ENCODE measurements at regions of chrX and their contacts with region 1.

Region 1: DNA sequence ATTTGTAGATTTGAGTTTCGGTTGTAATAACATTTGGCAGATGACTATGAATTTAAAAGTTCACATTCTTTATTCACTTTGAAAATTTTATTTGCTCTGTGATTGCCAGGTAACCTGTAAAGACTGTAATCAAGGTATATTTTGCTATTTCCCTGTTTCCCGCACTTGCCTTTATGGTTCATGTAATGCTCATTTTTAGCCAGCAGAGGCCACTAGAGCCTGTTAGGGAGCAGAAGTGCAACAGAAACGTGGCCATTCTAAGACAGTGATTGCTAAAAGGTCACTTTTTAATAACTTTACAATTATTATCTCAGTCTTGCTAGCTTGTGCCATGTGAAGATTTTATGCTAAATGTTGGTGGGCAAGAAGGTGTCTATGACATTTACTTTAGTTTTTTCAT is 12.4 kb downstream of the YIPF6 start:
- DNase-seq: no peak
- H3K4me3 ChIP-seq: no peak overlapping the region
- H3K27ac ChIP-seq: no peak overlapping the region
- H3K4me1 ChIP-seq: peaks cover 37% of the 10 kb centered on the region
- H3K27me3 ChIP-seq: no peaks in the 10 kb centered on the region
- CTCF ChIP-seq: peak; percentile 77

Region 2: GRCh38 chrX:68183612-68184214 is 327.5 kb before region 1 on chrX:
- intact Hi-C with region 1: no loop called
- DNase-seq: no peak
- H3K4me3 ChIP-seq: no peak overlapping the region
- H3K27ac ChIP-seq: no peak overlapping the region
- H3K4me1 ChIP-seq: no peaks in the 10 kb centered on the region
- H3K27me3 ChIP-seq: no peaks in the 10 kb centered on the region
- CTCF ChIP-seq: peak; percentile 43

Region 3: DNA sequence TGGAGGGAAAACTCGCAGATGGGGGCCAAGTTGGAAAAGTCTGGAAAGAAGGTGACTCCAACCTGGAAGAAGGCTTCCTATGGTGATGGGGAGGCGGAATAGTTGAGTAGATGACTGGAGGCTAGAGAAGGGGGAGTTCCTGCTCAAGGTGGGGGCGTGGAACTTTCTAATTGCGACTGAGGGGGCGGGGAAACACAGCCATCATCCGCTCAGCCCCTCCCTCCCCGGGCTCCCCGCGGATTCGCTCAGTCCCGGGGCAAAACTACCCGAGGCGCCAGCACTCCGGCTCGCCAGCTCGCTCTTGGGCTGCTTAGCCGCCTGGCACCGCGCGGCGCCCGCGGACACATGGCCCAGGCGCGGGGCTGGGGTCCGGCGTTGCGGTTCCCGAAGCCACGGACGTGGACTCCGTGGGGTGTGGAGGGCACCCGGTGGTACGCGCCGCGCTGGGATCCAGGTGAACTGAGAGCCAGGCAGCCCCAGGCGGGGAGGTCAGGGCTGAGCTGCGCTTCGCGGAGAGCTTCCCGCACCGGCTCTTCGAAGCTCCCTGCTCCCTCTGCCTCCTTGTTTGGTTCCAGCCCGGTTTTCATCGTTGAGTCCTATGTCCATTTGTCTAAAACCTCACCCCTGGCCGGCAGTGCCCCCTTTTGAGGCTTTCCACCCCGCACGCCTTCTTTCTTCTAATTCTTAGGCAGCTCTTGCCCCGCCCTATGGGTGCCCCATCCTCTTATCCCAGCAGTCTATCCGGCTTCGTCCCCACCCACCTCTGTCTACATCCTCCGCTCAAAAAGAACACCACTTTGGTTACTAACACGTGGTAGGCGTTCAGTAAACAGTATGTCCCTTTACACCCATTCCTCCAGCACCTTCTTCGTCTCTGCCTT is 175.1 kb after region 1 on chrX:
- intact Hi-C with region 1: no loop called
- DNase-seq: peak; percentile 53
- H3K4me3 ChIP-seq: peak overlapping the region; percentile 65
- H3K27ac ChIP-seq: peak overlapping the region; percentile 87
- H3K4me1 ChIP-seq: peaks cover 68% of the 10 kb centered on the region
- H3K27me3 ChIP-seq: no peaks in the 10 kb centered on the region
- CTCF ChIP-seq: no peak

Region 4: DNA sequence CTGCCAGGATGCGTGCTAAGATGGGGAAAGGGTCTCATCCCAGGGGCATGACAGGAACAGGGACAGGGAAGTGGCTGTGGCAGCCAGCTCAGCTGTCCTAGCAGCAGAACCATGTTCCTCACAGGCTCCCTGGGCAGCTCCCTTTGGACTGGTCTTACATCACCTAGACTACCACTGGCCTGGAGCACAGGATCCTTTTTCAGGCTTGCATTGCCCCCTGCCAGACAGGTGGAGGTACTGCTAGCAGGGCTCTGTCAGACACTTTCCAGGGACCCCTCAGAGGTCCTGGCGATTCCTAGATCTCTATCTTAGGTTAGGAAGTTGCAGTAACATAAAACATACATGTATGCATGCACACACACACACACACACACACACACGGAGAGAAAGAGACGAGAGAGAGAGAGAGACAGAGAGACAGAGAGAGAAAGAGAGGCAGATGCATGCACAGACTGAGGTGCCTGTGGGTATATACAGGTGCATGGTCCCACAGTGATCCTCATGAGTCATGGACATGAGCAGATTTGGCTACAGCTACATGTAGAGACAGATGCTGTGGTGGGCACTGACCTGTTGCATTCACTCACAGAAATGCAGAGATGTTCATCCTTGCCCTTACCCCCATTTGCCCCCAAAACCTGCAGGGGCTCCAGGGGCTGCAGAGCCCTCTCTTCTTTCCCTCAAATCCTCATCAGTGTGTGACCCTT is 199.8 kb after region 1 on chrX:
- intact Hi-C with region 1: loop called (anchors 5 kb)
- DNase-seq: no peak
- H3K4me3 ChIP-seq: no peak overlapping the region
- H3K27ac ChIP-seq: peak overlapping the region; percentile 30
- H3K4me1 ChIP-seq: peaks cover 47% of the 10 kb centered on the region
- H3K27me3 ChIP-seq: no peaks in the 10 kb centered on the region
- CTCF ChIP-seq: peak; percentile 57

Region 5: DNA sequence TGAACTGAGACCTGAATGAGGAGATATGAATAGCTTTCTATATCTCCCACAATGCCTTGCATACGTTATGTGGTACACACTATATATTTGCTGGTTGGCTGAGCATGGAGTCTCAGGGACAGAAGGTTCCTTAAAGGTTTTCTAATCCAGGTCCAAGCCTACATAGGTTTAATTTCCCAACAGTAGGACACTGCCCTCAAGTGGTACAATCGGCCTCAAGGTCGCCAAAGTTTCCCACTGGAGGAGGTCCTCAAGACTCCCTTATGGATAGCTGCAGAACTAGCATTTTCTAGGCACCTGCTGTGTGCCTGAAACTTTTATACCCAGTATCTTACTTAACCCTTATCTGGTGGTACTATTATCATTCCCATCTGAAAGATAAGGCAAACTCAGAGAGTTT is 296.6 kb after region 1 on chrX:
- intact Hi-C with region 1: loop called (anchors 5 kb)
- DNase-seq: no peak
- H3K4me3 ChIP-seq: no peak overlapping the region
- H3K27ac ChIP-seq: no peak overlapping the region
- H3K4me1 ChIP-seq: no peaks in the 10 kb centered on the region
- H3K27me3 ChIP-seq: no peaks in the 10 kb centered on the region
- CTCF ChIP-seq: peak; percentile 63

Measured in left ventricle myocardium inferior (tissue), 1 donor.